CD8-positive, alpha-beta T cell (primary cell): ENCODE measurements at regions of chr14 and their contacts with region 1.

Region 1: GRCh38 chr14:77457522-77458290 is at the starts of genes AHSA1 and VIPAS39:
- DNase-seq: peak; percentile 84 to 99 (median 93)
- ATAC-seq: peak; percentile 94
- H3K4me3 ChIP-seq: peak within 1 kb of the TSS; percentile 95 to 99
- H3K4me3 Mint-ChIP-seq: peak within 1 kb of the TSS; percentile 100
- H3K27ac ChIP-seq: peak within 1 kb of the TSS; percentile 72 to 96
- H3K27ac Mint-ChIP-seq: peak within 1 kb of the TSS; percentile 99
- H3K4me1 ChIP-seq: peaks cover 24% of the 10 kb centered on the region
- H3K4me1 Mint-ChIP-seq: peaks cover 62% of the 10 kb centered on the region
- H3K27me3 ChIP-seq: no peaks in the 10 kb centered on the region
- H3K27me3 Mint-ChIP-seq: no peaks in the 10 kb centered on the region
- CTCF ChIP-seq: no peak
- total RNA-seq, gene AHSA1: 37.0 to 43.5 TPM
- total RNA-seq, gene VIPAS39: 7.2 to 8.1 TPM

Region 2: DNA sequence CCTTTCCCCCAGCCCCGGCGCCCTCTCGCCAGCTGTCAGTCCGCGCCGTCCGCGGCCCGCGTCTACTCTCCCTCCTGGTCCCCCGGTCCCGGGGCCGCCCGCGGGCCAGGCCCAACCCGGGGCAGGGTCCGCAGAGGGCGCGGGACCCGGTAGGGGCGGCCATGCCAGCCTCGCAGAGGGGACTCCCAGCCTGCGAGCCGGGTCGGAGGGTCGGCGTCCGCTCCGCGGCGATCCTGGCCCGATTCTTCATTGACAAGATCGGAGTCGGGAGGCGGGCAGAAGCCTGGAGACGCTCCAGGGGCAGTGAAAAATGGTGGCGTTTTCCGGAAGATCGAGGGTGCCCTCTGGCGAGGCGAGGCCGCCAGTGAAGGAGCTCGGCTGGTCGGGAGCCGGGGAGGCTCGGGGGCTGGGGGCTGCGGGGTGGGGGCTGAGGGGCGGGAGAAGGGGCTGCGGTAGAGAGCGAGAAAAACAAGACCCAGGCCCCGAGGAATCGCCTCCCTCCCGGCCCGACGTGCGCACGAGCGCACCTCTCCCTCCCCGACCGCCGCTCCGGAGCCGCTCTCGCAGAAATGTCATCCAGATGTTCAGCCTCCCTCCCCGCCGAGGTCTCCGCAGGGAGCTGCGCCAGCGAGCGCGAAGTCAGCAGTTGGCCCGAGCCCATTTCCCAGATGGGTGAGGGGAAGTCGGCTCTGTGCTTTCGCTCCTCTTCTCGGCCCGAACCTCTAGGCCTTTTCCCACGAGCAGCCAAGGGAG is 1475.3 kb before region 1 on chr14:
- CTCF ChIA-PET with region 1: no interaction called
- POLR2A ChIA-PET with region 1: no interaction called
- intact Hi-C with region 1: loop called in 1 of 2 experiments (anchors 10 kb)
- DNase-seq: peak; percentile 57 to 87 (median 77)
- ATAC-seq: peak; percentile 59
- H3K4me3 ChIP-seq: peak overlapping the region; percentile 59 to 87
- H3K4me3 Mint-ChIP-seq: peak overlapping the region; percentile 82
- H3K27ac ChIP-seq: peak overlapping the region; percentile 64 to 75
- H3K27ac Mint-ChIP-seq: peak overlapping the region; percentile 86
- H3K4me1 ChIP-seq: peaks cover 33% of the 10 kb centered on the region
- H3K4me1 Mint-ChIP-seq: peaks cover 57% of the 10 kb centered on the region
- H3K27me3 ChIP-seq: no peaks in the 10 kb centered on the region
- H3K27me3 Mint-ChIP-seq: no peaks in the 10 kb centered on the region
- CTCF ChIP-seq: peak; percentile 48

Region 3: DNA sequence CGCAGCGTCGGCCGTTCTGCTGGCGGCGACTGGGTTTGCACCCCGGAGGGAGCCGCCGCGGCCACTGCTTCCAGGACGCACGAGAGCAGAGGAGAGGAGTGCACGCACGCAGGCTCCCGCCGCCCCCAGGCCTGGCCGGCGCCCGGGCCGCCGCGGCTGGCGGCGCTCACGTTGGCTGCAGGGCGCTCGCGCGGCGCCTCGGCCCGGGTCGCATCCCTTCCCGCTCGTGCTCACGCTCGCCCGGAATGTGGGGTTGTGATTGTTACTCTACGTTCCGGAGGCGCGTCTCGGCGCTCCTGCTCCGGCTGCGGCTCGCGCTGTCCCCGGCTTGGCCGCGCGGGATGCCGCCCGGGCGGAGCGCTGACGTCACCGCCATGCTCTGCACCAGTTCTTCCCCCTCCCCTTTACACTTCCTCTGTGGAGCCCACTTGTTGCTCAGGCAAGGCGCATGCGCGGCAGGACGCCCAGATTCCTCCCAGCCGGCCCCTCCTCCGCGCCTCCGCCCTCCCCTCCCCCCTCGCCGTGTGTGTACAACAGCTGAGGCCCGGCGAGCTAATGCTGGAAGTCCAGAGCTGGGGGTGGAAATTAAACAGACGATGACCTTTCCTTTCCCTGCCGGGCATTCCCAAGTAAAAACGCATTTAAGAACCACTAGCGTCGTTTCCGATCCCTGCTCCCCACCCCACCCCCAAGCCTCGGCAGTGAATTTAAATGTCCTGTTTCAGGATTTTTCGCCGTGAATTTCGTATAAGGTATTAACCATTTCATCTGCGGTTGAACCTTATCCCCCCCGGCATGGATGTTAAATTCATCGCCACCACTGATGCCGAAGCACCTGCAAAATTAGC is 429.1 kb before region 1 on chr14 and contains the start of gene IRF2BPL:
- CTCF ChIA-PET with region 1: no interaction called
- POLR2A ChIA-PET with region 1: no interaction called
- intact Hi-C with region 1: loop called in 1 of 2 experiments (anchors 5 kb)
- DNase-seq: peak; percentile 86 to 98 (median 94)
- ATAC-seq: peak; percentile 68
- H3K4me3 ChIP-seq: peak within 1 kb of the TSS; percentile 66 to 94
- H3K4me3 Mint-ChIP-seq: peak within 1 kb of the TSS; percentile 93
- H3K27ac ChIP-seq: peak within 1 kb of the TSS; percentile 90 to 94
- H3K27ac Mint-ChIP-seq: peak within 1 kb of the TSS; percentile 96
- H3K4me1 ChIP-seq: peaks cover 69% of the 10 kb centered on the region
- H3K4me1 Mint-ChIP-seq: peaks cover 60% of the 10 kb centered on the region
- H3K27me3 ChIP-seq: no peaks in the 10 kb centered on the region
- H3K27me3 Mint-ChIP-seq: no peaks in the 10 kb centered on the region
- CTCF ChIP-seq: peak; percentile 2
- total RNA-seq, gene IRF2BPL: 53.7 to 53.9 TPM

Region 4: DNA sequence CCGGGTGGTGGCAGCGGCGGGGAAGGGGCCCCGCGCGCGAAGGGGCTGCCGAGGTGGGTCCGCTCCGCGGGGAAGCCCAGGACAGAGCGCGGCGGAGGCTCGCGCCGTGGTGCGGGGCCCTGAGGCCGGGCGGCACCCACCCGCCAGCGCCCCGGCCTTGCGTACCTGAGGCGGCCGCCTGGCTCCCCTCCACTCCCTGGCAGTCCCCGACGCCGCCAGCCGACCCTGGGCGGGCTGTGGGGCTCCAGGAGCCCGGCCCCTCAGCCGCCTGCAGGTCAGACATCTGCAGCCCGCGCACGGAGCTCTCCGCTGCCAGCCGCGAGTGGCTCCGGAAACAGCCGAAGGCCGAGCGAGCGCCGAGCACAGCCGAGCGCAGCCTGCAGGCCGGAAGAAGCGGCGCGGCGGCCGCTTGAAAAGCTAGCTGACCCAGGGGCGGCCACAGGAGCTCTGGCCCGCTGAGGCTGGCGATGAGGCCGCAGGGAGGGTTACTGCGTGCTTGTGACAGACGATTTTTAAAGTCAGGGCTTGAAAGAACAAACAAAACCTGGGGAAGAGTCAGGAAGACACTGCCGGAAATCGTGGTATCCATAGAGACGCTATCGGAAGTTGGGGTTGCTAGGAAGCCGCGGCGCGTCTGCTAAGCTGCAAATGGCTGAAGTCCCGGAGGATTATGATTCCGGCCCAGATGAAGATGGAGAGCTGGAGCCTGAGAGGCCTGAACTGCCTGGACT is 80.8 kb before region 1 on chr14 and contains the starts of genes SAMD15 and TMED8:
- CTCF ChIA-PET with region 1: no interaction called
- POLR2A ChIA-PET with region 1: interaction called, 5 read pairs
- intact Hi-C with region 1: loop called (anchors 1 kb)
- DNase-seq: peak; percentile 69 to 92 (median 82)
- ATAC-seq: peak; percentile 95
- H3K4me3 ChIP-seq: peak within 1 kb of the TSS; percentile 74 to 96
- H3K4me3 Mint-ChIP-seq: peak within 1 kb of the TSS; percentile 89
- H3K27ac ChIP-seq: peak within 1 kb of the TSS; percentile 62 to 91
- H3K27ac Mint-ChIP-seq: peak within 1 kb of the TSS; percentile 87
- H3K4me1 ChIP-seq: peaks cover 17% of the 10 kb centered on the region
- H3K4me1 Mint-ChIP-seq: peaks cover 38% of the 10 kb centered on the region
- H3K27me3 ChIP-seq: no peaks in the 10 kb centered on the region
- H3K27me3 Mint-ChIP-seq: no peaks in the 10 kb centered on the region
- CTCF ChIP-seq: no peak
- total RNA-seq, gene SAMD15: 0.50 to 0.52 TPM
- total RNA-seq, gene TMED8: 4.3 to 4.6 TPM

Region 5: GRCh38 chr14:77439861-77440260 is 17.8 kb before region 1 on chr14:
- CTCF ChIA-PET with region 1: no interaction called
- POLR2A ChIA-PET with region 1: no interaction called
- intact Hi-C with region 1: no loop called
- DNase-seq: no peak
- ATAC-seq: no peak
- H3K4me3 ChIP-seq: no peak overlapping the region
- H3K4me3 Mint-ChIP-seq: no peak overlapping the region
- H3K27ac ChIP-seq: no peak overlapping the region
- H3K27ac Mint-ChIP-seq: no peak overlapping the region
- H3K4me1 ChIP-seq: no peaks in the 10 kb centered on the region
- H3K4me1 Mint-ChIP-seq: no peaks in the 10 kb centered on the region
- H3K27me3 ChIP-seq: no peaks in the 10 kb centered on the region
- H3K27me3 Mint-ChIP-seq: no peaks in the 10 kb centered on the region
- CTCF ChIP-seq: no peak

Region 6: DNA sequence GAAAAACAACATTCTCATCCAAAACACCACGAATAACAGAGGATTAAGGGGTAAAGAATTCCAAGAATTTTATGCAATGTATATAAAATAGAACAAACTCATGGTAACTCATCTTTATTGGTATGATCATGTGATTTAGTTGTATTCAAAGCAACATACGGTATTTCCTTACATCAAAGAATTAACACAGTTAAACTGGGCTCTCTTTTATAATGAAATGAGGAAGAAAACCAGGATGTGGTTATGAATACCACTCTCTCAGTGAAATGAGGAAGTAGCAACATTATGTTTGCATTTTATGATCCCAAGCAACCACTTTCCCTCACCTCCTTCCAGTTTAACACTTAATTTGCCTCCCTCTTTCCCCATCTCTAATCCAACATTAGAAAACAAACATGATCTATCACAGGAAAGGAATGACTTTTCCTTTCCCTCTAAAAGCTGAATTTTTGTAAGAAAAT is 135.8 kb after region 1 on chr14:
- CTCF ChIA-PET with region 1: no interaction called
- POLR2A ChIA-PET with region 1: no interaction called
- intact Hi-C with region 1: loop called in 1 of 2 experiments (anchors 5 kb)
- DNase-seq: peak in 2 of 9 experiments; percentile 28 to 69
- ATAC-seq: peak; percentile 81
- H3K4me3 ChIP-seq: peak overlapping the region; percentile 1 to 16
- H3K4me3 Mint-ChIP-seq: peak overlapping the region; percentile 75
- H3K27ac ChIP-seq: peak overlapping the region; percentile 38 to 75
- H3K27ac Mint-ChIP-seq: peak overlapping the region; percentile 92
- H3K4me1 ChIP-seq: peaks cover 25% of the 10 kb centered on the region
- H3K4me1 Mint-ChIP-seq: peaks cover 54% of the 10 kb centered on the region
- H3K27me3 ChIP-seq: no peaks in the 10 kb centered on the region
- H3K27me3 Mint-ChIP-seq: no peaks in the 10 kb centered on the region
- CTCF ChIP-seq: no peak

Region 7: DNA sequence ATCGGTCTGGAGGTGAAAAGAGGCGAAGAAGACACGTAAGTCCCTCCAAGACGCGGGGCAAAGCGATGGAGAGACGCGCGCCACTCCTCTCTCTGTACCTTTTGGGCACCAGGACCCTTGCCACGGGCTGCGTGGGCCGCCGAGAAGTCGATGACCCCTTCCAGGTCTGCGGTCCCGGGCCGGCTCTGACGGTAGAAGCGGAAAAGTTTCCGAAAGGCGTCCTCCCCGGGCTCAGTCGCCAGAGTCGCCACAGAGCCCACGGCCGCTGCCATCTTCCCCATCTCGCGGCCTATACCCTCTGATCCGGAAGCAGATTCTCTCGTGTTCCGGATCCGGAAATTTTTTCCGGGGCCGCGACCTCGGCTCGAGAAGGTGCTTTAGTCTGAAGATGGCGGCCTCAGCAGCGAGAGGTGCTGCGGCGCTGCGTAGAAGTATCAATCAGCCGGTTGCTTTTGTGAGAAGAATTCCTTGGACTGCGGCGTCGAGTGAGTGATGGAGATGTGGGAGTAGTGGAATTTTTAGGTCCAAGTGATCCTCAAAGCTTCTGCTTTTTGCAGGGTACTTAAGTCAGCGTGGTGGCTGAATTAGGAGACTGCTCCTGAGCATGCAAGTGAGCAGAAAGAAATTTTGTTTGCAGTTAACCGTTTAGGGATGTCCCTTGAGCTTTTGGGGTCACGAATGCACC is 250.2 kb after region 1 on chr14 and contains the starts of genes ALKBH1 and SLIRP:
- CTCF ChIA-PET with region 1: interaction called, 8 read pairs
- POLR2A ChIA-PET with region 1: interaction called, 3 read pairs
- intact Hi-C with region 1: loop called (anchors 1 kb)
- DNase-seq: peak; percentile 73 to 93 (median 88)
- ATAC-seq: peak; percentile 97
- H3K4me3 ChIP-seq: peak within 1 kb of the TSS; percentile 91 to 92
- H3K4me3 Mint-ChIP-seq: peak within 1 kb of the TSS; percentile 96
- H3K27ac ChIP-seq: peak within 1 kb of the TSS; percentile 72 to 75
- H3K27ac Mint-ChIP-seq: peak within 1 kb of the TSS; percentile 91
- H3K4me1 ChIP-seq: peaks cover 29% of the 10 kb centered on the region
- H3K4me1 Mint-ChIP-seq: peaks cover 46% of the 10 kb centered on the region
- H3K27me3 ChIP-seq: no peaks in the 10 kb centered on the region
- H3K27me3 Mint-ChIP-seq: no peaks in the 10 kb centered on the region
- CTCF ChIP-seq: no peak
- total RNA-seq, gene ALKBH1: 10.7 to 11.9 TPM
- total RNA-seq, gene SLIRP: 58.2 TPM

Region 8: DNA sequence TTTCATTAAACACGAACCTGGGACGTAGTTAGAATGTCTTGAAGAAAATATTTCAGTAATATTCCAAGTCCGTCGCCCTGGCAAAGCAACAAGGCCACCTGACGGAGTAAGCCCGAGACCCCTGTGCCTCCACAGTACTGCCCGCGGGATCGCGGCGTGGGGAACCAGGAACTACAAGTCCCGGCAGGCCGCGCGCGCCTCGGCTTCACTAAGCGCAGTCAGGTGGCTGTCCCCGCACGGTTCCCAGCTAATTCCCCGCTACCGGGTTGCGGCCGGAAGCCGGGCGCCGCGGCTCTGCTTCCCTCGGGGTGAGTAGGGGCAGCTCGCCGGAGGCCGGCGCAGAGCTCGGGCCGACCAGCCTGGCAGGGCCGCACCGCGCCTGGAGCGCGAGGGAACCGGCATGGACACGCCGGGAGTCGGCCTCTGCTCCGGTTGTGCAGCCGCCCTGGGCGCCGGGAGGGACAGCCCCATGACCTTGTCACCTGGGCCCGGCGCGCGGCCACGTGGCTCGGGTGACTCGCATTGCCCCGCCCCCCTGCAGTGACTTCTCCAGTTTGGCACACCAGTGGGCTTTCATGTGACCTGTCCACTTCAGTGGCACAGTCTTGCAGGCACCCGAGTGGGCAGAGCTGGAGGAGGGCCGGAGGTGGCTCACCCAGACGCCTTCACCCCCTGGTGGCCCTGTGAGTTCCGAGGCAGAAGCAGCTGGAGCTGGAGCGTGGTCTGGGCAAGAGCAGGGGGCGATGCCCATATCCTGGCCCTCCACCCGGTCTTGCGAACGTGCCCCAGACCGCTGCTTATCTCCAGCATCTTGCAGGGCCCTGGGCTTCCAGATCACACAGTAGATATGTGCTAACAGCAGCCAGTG is 342.4 kb after region 1 on chr14 and contains the start of gene ADCK1:
- CTCF ChIA-PET with region 1: interaction called, 4 read pairs
- POLR2A ChIA-PET with region 1: no interaction called
- intact Hi-C with region 1: loop called (anchors 1 to 2 kb)
- DNase-seq: peak; percentile 54 to 89 (median 83)
- ATAC-seq: peak; percentile 91
- H3K4me3 ChIP-seq: peak within 1 kb of the TSS; percentile 68 to 96
- H3K4me3 Mint-ChIP-seq: peak within 1 kb of the TSS; percentile 83
- H3K27ac ChIP-seq: peak within 1 kb of the TSS; percentile 73 to 78
- H3K27ac Mint-ChIP-seq: peak within 1 kb of the TSS; percentile 76
- H3K4me1 ChIP-seq: peaks cover 3% of the 10 kb centered on the region
- H3K4me1 Mint-ChIP-seq: peaks cover 10% of the 10 kb centered on the region
- H3K27me3 ChIP-seq: no peaks in the 10 kb centered on the region
- H3K27me3 Mint-ChIP-seq: peaks cover 2% of the 10 kb centered on the region
- CTCF ChIP-seq: no peak
- total RNA-seq, gene ADCK1: 3.6 to 4.7 TPM